ENCODE measurements at regions of chr15 and their contacts with region 1.

Region 1: GRCh38 chr15:101251830-101252820 is at the start of gene CHSY1:
- DNase-seq: peak; percentile 83 to 91 (median 86)
- ATAC-seq: peak; percentile 75
- H3K4me3 ChIP-seq: peak within 1 kb of the TSS; percentile 70
- H3K27ac ChIP-seq: peak within 1 kb of the TSS; percentile 68
- H3K4me1 ChIP-seq: peaks cover 29 to 31% of the 10 kb centered on the region in 2 experiments
- H3K27me3 ChIP-seq: no peaks in the 10 kb centered on the region
- CTCF ChIP-seq: peak in 2 of 3 experiments; percentile 42 to 46; a peak in 3 of 6 replicates
- EP300 ChIP-seq: no peak
- POLR2A ChIP-seq: peak; percentile 56; the same call in 1 of the 2 replicates
- RAD21 ChIP-seq: peak; percentile 32 to 68; a peak in 3 of 4 replicates
- polyA plus RNA-seq, gene CHSY1: 7.0 to 11.1 TPM

Region 2: GRCh38 chr15:100627789-100628395 is 624.2 kb before region 1 on chr15:
- CTCF ChIA-PET with region 1: no interaction called
- POLR2A ChIA-PET with region 1: no interaction called
- in situ Hi-C with region 1: loop called (anchors 25 kb)
- intact Hi-C with region 1: loop called (anchors 10 kb)
- DNase-seq: peak; percentile 61 to 73 (median 68)
- ATAC-seq: peak; percentile 94
- H3K4me3 ChIP-seq: no peak overlapping the region
- H3K27ac ChIP-seq: no peak overlapping the region
- H3K4me1 ChIP-seq: no peaks in the 10 kb centered on the region; a peak in 1 of 5 replicates
- H3K27me3 ChIP-seq: no peaks in the 10 kb centered on the region
- CTCF ChIP-seq: peak; percentile 55 to 85 (median 78)
- EP300 ChIP-seq: no peak
- POLR2A ChIP-seq: no peak
- RAD21 ChIP-seq: peak; percentile 63 to 74

Region 3: DNA sequence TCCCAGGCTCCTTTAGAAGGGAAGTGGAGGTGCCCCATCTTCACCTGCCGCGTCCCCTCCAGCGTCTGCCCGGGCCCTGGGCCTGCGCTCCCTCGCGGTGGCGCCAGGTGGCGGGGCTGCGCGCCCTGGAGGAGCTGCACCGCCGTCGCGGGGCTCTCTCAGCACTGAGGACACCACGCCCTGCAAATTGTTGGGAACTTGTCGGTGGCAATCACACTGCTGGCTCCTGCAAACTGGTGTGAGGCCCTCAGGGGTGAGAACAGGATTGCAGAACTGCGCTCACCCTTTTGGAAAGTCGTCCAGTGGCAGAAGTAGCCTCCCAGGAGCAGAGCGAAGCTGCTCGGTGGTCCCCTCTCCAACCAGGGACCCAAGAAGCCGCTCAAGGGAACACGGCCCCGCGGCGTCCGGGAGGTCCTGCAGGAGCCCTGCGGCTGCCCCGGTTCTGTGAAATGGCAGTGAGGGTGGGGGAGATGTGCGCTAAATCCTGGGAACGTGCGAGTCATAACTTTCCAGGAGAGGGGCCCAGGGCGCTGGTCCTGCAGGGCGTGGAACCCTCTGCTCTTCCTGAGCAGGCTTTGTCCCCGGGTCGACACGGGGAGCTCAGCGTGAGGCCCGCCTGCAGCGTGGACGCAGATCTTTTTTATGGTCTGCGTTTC is 334.0 kb before region 1 on chr15:
- CTCF ChIA-PET with region 1: no interaction called
- POLR2A ChIA-PET with region 1: interaction called, 3 read pairs
- in situ Hi-C with region 1: loop called (anchors 25 kb)
- intact Hi-C with region 1: loop called (anchors 5 kb)
- DNase-seq: peak; percentile 69 to 80 (median 76)
- ATAC-seq: peak; percentile 99
- H3K4me3 ChIP-seq: no peak overlapping the region
- H3K27ac ChIP-seq: no peak overlapping the region
- H3K4me1 ChIP-seq: peaks cover 0 to 20% of the 10 kb centered on the region in 2 experiments; a peak in 2 of 5 replicates
- H3K27me3 ChIP-seq: peaks cover 24 to 58% of the 10 kb centered on the region in 2 experiments
- CTCF ChIP-seq: peak; percentile 85 to 97 (median 85)
- EP300 ChIP-seq: no peak
- POLR2A ChIP-seq: no peak
- RAD21 ChIP-seq: peak; percentile 44 to 73; a peak in 3 of 4 replicates

Region 4: GRCh38 chr15:101088788-101089583 is 163.1 kb before region 1 on chr15:
- CTCF ChIA-PET with region 1: interaction called, 29 read pairs
- POLR2A ChIA-PET with region 1: interaction called, 11 read pairs
- in situ Hi-C with region 1: loop called (anchors 5 kb)
- intact Hi-C with region 1: no loop called
- DNase-seq: peak; percentile 70 to 77 (median 74)
- ATAC-seq: peak; percentile 71
- H3K4me3 ChIP-seq: no peak overlapping the region
- H3K27ac ChIP-seq: no peak overlapping the region
- H3K4me1 ChIP-seq: peaks cover 11 to 39% of the 10 kb centered on the region in 2 experiments; a peak in 4 of 5 replicates
- H3K27me3 ChIP-seq: peaks cover 2 to 18% of the 10 kb centered on the region in 2 experiments; a peak in 3 of 5 replicates
- CTCF ChIP-seq: peak; percentile 87 to 96 (median 94)
- EP300 ChIP-seq: no peak
- POLR2A ChIP-seq: no peak
- RAD21 ChIP-seq: peak; percentile 86 to 91

Region 5: GRCh38 chr15:101307048-101307896 is 55.1 kb after region 1 on chr15:
- CTCF ChIA-PET with region 1: no interaction called
- POLR2A ChIA-PET with region 1: no interaction called
- in situ Hi-C with region 1: no loop called
- intact Hi-C with region 1: no loop called
- DNase-seq: no peak
- ATAC-seq: peak; percentile 12; the same call in 2 of the 3 replicates
- H3K4me3 ChIP-seq: no peak overlapping the region
- H3K27ac ChIP-seq: no peak overlapping the region
- H3K4me1 ChIP-seq: no peaks in the 10 kb centered on the region; a peak in 1 of 5 replicates
- H3K27me3 ChIP-seq: peaks cover 0 to 48% of the 10 kb centered on the region in 2 experiments; a peak in 4 of 5 replicates
- CTCF ChIP-seq: no peak
- EP300 ChIP-seq: no peak
- POLR2A ChIP-seq: no peak
- RAD21 ChIP-seq: no peak

Measured in K562 (cell line).